Activated B cell treated with CpG ODN at 0.5 μM for 24 hours (primary cell): ENCODE measurements at regions of chr4 and their contacts with region 1.

Region 1: DNA sequence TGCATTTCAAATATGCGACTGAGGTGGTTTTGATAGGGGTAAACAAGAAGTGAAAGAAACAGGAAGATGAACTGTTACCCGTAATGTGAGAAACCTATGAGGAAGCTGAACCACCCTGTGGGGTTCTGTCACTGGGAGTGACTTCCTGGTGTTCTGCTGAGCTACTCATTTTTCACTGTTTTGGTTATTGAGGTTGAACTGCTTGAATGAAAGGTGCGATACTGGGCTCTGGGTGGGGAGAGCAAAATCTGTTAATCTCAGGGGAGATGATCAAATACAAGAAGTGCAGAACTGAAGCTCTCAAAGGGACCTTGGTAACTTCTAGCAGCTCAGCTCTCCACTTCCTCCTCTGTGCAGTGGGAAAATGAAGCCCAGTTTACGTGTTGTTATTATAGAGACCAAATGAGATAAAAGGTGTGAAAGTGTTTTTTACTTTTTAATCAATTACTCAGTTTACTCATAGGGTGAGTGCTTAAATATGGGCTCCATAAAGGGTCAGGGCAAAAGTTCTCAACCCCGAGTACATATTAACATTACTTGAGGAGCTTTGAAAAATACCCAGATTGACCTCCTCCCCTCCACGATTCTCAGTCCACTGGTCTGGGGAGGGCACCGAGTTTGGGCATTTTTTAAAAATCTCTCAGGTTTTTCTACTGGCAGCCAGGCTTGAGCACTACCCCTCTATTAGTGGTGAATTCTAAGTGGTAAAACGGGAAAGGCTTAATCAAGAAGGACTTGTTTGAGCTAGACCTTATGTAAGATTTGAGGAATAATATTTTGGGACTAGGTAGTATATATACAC is 66.7 kb downstream of the COQ2 start:
- DNase-seq: peak; percentile 40
- ATAC-seq: peak; percentile 90
- H3K4me3 Mint-ChIP-seq: peak overlapping the region; percentile 76
- H3K27ac Mint-ChIP-seq: peak overlapping the region; percentile 91
- H3K4me1 Mint-ChIP-seq: peaks cover 91% of the 10 kb centered on the region
- H3K27me3 Mint-ChIP-seq: no peaks in the 10 kb centered on the region
- CTCF ChIP-seq: no peak

Region 2: DNA sequence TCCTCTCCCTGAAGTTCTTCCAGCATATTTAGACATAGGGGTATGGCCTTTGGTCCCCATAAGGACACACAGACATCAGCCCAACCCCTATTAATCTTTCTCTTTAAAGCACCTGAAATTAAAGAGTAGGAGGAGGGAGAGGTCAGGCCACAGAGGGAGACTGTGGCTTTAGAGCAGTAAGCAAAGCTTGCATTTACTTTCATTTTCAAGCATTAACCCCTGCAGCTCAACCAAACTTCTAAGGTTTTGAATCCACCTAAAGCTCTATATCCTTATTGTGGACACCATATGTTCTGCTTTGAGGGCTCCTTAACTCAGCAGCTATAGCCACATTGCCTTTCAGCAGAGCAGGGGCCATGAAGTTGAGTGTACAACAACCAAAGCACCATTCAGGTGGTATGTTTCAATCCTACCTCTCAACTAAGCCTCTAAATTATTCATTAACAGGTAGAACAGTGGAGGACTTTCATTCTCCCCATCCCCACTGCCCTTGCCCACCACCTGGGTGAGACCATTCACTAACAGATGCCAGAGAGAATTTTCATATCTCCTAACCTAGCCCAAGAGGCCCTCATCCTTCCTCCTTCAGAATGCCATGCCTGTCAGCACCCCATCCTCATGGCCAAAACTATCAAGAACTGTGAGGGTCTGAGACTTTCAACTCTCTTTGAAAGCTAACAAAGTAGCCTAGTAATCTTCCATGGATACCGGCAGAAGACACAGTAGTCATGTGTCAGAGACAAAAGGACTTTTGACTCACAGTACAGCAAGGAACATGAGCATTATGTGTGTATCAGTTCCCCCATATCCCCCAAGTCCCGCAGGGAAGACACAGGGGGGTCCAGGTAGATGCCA is 228.1 kb before region 1 on chr4:
- CTCF ChIA-PET with region 1: no interaction called
- POLR2A ChIA-PET with region 1: no interaction called
- intact Hi-C with region 1: no loop called
- DNase-seq: no peak
- ATAC-seq: peak; percentile 37
- H3K4me3 Mint-ChIP-seq: no peak overlapping the region
- H3K27ac Mint-ChIP-seq: no peak overlapping the region
- H3K4me1 Mint-ChIP-seq: peaks cover 14% of the 10 kb centered on the region
- H3K27me3 Mint-ChIP-seq: no peaks in the 10 kb centered on the region
- CTCF ChIP-seq: no peak

Region 3: DNA sequence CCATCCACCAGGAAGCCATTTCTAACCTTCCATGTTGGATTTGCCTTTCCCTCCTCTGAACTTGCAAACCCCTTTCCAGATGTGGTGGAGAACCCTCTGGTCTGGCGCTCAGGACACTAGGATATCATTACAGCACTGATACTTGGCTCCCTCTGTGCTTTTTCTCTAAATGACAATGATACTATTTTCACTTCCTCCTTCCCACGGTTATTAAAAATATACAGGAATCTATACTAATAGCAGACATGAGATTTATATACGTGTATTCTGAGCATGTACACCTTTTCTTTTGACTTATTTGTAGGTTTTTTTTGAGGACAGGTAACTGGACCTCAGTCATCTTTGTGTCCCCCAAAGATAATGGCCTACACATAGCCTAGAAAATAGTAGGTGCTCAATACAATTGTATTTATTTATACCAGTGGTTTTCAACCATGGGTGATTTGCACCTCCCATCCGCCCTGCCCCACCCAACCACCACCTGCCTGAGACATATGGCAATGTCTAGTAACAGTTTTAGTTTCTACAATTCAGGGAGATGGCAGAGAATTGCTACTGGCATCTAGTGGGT is 43.0 kb before region 1 on chr4:
- CTCF ChIA-PET with region 1: interaction called, 5 read pairs
- POLR2A ChIA-PET with region 1: interaction called, 25 read pairs
- intact Hi-C with region 1: loop called (anchors 1 kb)
- DNase-seq: peak; percentile 32
- ATAC-seq: peak; percentile 74
- H3K4me3 Mint-ChIP-seq: peak overlapping the region; percentile 83
- H3K27ac Mint-ChIP-seq: peak overlapping the region; percentile 94
- H3K4me1 Mint-ChIP-seq: peaks cover 88% of the 10 kb centered on the region
- H3K27me3 Mint-ChIP-seq: no peaks in the 10 kb centered on the region
- CTCF ChIP-seq: no peak

Region 4: DNA sequence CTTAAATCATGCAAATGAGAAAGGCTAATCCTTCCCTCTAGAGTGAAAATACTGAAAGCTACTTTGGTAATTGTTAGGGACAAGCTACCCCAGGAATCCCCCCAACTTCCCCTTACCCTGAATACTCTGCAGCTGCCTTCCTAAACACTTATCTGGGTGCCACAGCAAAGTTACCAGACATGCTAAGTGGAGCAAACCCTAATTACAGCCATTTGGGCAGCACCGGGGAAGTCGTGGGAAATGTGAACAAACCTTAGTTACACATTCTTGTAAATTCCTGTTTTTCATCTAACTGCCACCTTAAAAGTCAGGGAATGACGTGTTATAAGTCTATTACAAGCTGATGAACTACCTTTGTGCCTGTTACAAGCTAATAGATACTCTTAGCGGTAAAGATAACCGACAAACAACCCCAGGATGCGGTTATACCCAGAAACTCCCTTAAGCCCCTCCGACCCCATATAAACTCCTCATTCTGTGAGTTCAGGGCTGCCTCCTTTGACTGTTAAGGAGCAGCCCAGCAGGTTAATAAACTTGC is 37.4 kb before region 1 on chr4:
- CTCF ChIA-PET with region 1: interaction called, 5 read pairs
- POLR2A ChIA-PET with region 1: interaction called, 25 read pairs
- intact Hi-C with region 1: loop called (anchors 1 kb)
- DNase-seq: no peak
- ATAC-seq: peak; percentile 83
- H3K4me3 Mint-ChIP-seq: peak overlapping the region; percentile 59
- H3K27ac Mint-ChIP-seq: peak overlapping the region; percentile 90
- H3K4me1 Mint-ChIP-seq: peaks cover 52% of the 10 kb centered on the region
- H3K27me3 Mint-ChIP-seq: no peaks in the 10 kb centered on the region
- CTCF ChIP-seq: no peak

Region 5: GRCh38 chr4:83197555-83198235 is 20.2 kb before region 1 on chr4:
- CTCF ChIA-PET with region 1: no interaction called
- POLR2A ChIA-PET with region 1: interaction called, 15 read pairs
- intact Hi-C with region 1: no loop called
- DNase-seq: no peak
- ATAC-seq: peak; percentile 87
- H3K4me3 Mint-ChIP-seq: peak overlapping the region; percentile 28
- H3K27ac Mint-ChIP-seq: peak overlapping the region; percentile 74
- H3K4me1 Mint-ChIP-seq: peaks cover 39% of the 10 kb centered on the region
- H3K27me3 Mint-ChIP-seq: no peaks in the 10 kb centered on the region
- CTCF ChIP-seq: no peak

Region 6: GRCh38 chr4:83231620-83232076 is 13.7 kb after region 1 on chr4:
- CTCF ChIA-PET with region 1: interaction called, 4 read pairs
- POLR2A ChIA-PET with region 1: interaction called, 8 read pairs
- intact Hi-C with region 1: loop called (anchors 1 kb)
- DNase-seq: no peak
- ATAC-seq: peak; percentile 78
- H3K4me3 Mint-ChIP-seq: peak overlapping the region; percentile 67
- H3K27ac Mint-ChIP-seq: peak overlapping the region; percentile 85
- H3K4me1 Mint-ChIP-seq: peaks cover 52% of the 10 kb centered on the region
- H3K27me3 Mint-ChIP-seq: no peaks in the 10 kb centered on the region
- CTCF ChIP-seq: no peak

Region 7: DNA sequence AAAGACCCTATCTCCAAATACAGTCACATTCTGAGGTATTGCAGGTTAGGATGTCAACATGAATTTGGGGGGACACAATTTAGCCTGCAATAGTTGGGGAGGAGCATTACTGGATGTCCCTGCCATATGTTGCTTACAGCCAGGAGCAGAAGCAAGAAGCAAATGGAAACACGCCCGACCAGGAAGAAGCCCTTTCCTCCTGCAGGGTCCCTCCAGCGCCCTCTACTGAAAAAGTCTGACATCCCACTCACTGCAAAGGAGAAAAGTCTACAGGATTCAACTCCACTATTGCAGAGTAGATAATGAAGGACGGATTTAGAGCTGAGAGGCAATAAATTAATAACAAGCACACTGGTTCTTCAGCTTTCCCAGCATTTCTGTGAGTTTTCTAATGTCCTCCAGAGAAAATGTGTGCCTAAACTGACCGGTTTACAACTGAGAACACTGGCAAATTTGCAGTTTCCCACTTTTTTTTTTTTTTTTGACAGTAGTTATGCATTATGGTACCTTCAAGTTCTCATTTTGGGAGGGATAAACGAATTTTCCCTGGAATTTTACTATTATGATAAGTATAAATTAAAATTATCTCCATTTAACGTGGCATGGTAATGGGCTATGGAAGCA is 35.0 kb after region 1 on chr4:
- CTCF ChIA-PET with region 1: interaction called, 5 read pairs
- POLR2A ChIA-PET with region 1: interaction called, 14 read pairs
- intact Hi-C with region 1: loop called (anchors 1 kb)
- DNase-seq: no peak
- ATAC-seq: peak; percentile 73
- H3K4me3 Mint-ChIP-seq: no peak overlapping the region
- H3K27ac Mint-ChIP-seq: peak overlapping the region; percentile 38
- H3K4me1 Mint-ChIP-seq: peaks cover 58% of the 10 kb centered on the region
- H3K27me3 Mint-ChIP-seq: no peaks in the 10 kb centered on the region
- CTCF ChIP-seq: peak; percentile 59